Heart left ventricle (tissue), 16 donors: ENCODE measurements at regions of chr10 and their contacts with region 1.

Region 1: GRCh38 chr10:31697271-31698180 is 231.1 kb downstream of the ARHGAP12 start:
- DNase-seq: peak; percentile 88 to 93 (median 92)
- ATAC-seq: peak; percentile 84 to 89 (median 86)
- H3K4me3 ChIP-seq: peak overlapping the region in 9 of 12 donors; percentile 15 to 42 (median 27)
- H3K27ac ChIP-seq: peak overlapping the region; percentile 88 to 99 (median 96)
- H3K4me1 ChIP-seq: peaks cover 11 to 81% (median 54%) of the 10 kb centered on the region in 12 donors
- H3K27me3 ChIP-seq: no peaks in the 10 kb centered on the region
- CTCF ChIP-seq: no peak
- POLR2A ChIP-seq: peak in 1 of 2 donors; percentile 30

Region 2: GRCh38 chr10:31304291-31304970 is 393.1 kb before region 1 on chr10:
- intact Hi-C with region 1: no loop called
- DNase-seq: no peak
- ATAC-seq: no peak
- H3K4me3 ChIP-seq: no peak overlapping the region
- H3K27ac ChIP-seq: no peak overlapping the region
- H3K4me1 ChIP-seq: peaks cover 0 to 2% (median 0%) of the 10 kb centered on the region in 12 donors
- H3K27me3 ChIP-seq: no peaks in the 10 kb centered on the region
- CTCF ChIP-seq: no peak
- POLR2A ChIP-seq: no peak

Region 3: GRCh38 chr10:31581741-31582313 is 115.7 kb before region 1 on chr10:
- intact Hi-C with region 1: loop called in 1 of 10 experiments (anchors 5 kb)
- DNase-seq: peak in 3 of 5 donors; percentile 23 to 38 (median 28)
- ATAC-seq: peak; percentile 27 to 53 (median 34)
- H3K4me3 ChIP-seq: peak overlapping the region in 1 of 12 donors; percentile 8
- H3K27ac ChIP-seq: peak overlapping the region in 10 of 12 donors; percentile 2 to 77 (median 49)
- H3K4me1 ChIP-seq: peaks cover 8 to 50% (median 28%) of the 10 kb centered on the region in 12 donors
- H3K27me3 ChIP-seq: no peaks in the 10 kb centered on the region
- CTCF ChIP-seq: no peak
- POLR2A ChIP-seq: no peak

Region 4: DNA sequence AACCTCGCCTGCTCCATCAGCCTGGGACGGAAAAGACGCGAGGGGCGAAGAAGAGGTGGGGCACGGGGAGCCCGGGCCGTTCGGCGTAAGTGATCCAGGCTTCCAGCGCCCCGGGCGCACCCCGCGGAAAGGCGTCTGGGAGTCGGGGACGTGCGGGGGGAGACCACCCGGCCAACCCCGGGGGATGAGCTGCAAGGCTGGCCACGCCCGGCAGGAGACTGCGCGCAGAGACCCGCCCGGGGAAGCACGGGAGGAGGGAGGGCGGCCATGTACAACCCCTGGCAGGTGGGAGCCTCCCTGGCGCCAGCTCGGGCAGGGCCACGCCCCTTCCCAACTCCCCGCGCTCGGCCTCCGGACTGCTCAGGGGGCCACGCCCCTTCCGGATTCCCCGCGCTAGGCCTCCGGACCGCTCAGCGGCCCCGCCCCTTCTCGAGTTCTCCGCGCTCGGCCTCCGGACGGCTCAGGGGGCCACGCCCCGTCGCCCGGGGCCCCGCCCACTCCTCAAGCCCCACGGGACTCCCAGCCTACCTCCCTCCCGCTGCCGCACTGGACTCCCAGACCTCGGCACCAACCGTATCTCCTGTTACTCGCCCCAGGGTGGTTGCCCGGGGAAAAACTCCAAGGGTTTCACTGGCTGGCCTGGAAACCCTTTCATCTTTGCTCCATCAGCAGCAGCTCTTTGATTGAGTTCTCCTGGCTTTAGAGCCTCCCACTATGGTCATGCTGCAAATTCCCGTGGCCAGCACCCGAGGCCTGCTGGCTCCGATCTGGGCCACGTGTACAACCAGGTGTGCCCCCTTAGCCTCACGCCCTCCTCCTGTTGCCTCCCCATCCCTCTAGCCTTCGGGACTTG is 94.1 kb before region 1 on chr10:
- intact Hi-C with region 1: loop called in 2 of 10 experiments (anchors 5 to 10 kb)
- DNase-seq: peak; percentile 97 to 98 (median 97)
- ATAC-seq: peak; percentile 93 to 97 (median 96)
- H3K4me3 ChIP-seq: peak overlapping the region; percentile 42 to 80 (median 66)
- H3K27ac ChIP-seq: peak overlapping the region; percentile 79 to 95 (median 90)
- H3K4me1 ChIP-seq: peaks cover 0 to 36% (median 15%) of the 10 kb centered on the region in 12 donors
- H3K27me3 ChIP-seq: no peaks in the 10 kb centered on the region
- CTCF ChIP-seq: peak in 6 of 12 donors; percentile 7 to 18 (median 11)
- POLR2A ChIP-seq: peak in 1 of 2 donors; percentile 64

Region 5: DNA sequence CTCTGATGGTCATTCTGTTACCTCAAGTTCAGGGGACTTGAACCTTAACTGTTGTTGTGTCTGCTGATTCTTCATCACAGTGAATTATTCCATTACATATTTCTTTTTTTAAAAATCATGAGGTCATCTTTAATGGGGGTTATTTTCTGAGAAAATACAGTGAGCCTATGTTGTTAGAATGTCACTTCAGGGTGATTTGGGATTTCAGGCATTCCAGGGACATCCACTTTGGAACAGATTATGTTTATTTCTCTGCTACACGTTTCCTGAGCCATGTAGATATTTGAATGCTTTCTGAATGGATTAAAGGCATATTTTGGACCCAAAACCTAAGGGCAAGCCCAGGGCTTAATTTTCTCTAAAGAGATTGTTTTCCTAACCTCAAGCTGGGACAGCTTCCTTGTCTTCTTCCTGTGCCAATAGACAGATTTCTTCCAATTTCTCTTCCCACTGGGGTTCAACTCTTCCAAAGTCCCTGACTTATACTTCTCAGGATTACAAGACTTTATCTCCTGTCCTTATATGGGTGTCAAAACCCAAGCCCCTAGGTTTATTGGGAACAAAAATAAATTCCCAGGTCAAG is 40.6 kb before region 1 on chr10:
- intact Hi-C with region 1: loop called in 1 of 10 experiments (anchors 5 kb)
- DNase-seq: no peak
- ATAC-seq: peak; percentile 57 to 79 (median 70)
- H3K4me3 ChIP-seq: no peak overlapping the region
- H3K27ac ChIP-seq: peak overlapping the region in 10 of 12 donors; percentile 23 to 83 (median 66)
- H3K4me1 ChIP-seq: peaks cover 0 to 15% (median 0%) of the 10 kb centered on the region in 12 donors
- H3K27me3 ChIP-seq: no peaks in the 10 kb centered on the region
- CTCF ChIP-seq: no peak
- POLR2A ChIP-seq: no peak